A673 (cell line): ENCODE measurements at regions of chr16 and their contacts with region 1.

Region 1: GRCh38 chr16:85420501-85421337 is 192.4 kb upstream of the GSE1 start:
- DNase-seq: peak; percentile 73
- H3K4me3 ChIP-seq: no peak overlapping the region
- H3K27ac ChIP-seq: peak overlapping the region; percentile 41
- H3K4me1 ChIP-seq: peaks cover 26% of the 10 kb centered on the region
- H3K27me3 ChIP-seq: no peaks in the 10 kb centered on the region
- CTCF ChIP-seq: peak; percentile 99

Region 2: GRCh38 chr16:85402910-85403692 is 17.6 kb before region 1 on chr16:
- CTCF ChIA-PET with region 1: interaction called, 10 read pairs
- POLR2A ChIA-PET with region 1: no interaction called
- intact Hi-C with region 1: no loop called
- DNase-seq: peak; percentile 89
- H3K4me3 ChIP-seq: no peak overlapping the region
- H3K27ac ChIP-seq: peak overlapping the region; percentile 67
- H3K4me1 ChIP-seq: peaks cover 23% of the 10 kb centered on the region
- H3K27me3 ChIP-seq: no peaks in the 10 kb centered on the region
- CTCF ChIP-seq: no peak

Region 3: GRCh38 chr16:85554112-85554813 is 133.5 kb after region 1 on chr16:
- CTCF ChIA-PET with region 1: interaction called, 4 read pairs
- POLR2A ChIA-PET with region 1: no interaction called
- intact Hi-C with region 1: loop called (anchors 5 kb)
- DNase-seq: peak; percentile 92
- H3K4me3 ChIP-seq: peak overlapping the region; percentile 89
- H3K27ac ChIP-seq: peak overlapping the region; percentile 44
- H3K4me1 ChIP-seq: peaks cover 23% of the 10 kb centered on the region
- H3K27me3 ChIP-seq: no peaks in the 10 kb centered on the region
- CTCF ChIP-seq: no peak